GM13977 (cell line): ENCODE measurements at regions of chr18 and their contacts with region 1.

Region 1: GRCh38 chr18:61322265-61322873 is 10.9 kb upstream of the CDH20 start:
- DNase-seq: peak; percentile 69
- CTCF ChIP-seq: peak; percentile 97

Region 2: GRCh38 chr18:61475931-61476330 is 153.6 kb after region 1 on chr18:
- in situ Hi-C with region 1: loop called (anchors 25 kb)
- DNase-seq: no peak
- CTCF ChIP-seq: no peak